Endothelial cell of umbilical vein (primary cell): ENCODE measurements at regions of chr18 and their contacts with region 1.

Region 1: GRCh38 chr18:23225503-23225902 is 90.2 kb downstream of the CABLES1 start:
- DNase-seq: peak; percentile 75
- H3K4me3 ChIP-seq: no peak overlapping the region
- H3K27ac ChIP-seq: peak overlapping the region; percentile 98
- H3K4me1 ChIP-seq: peaks cover 52% of the 10 kb centered on the region
- H3K27me3 ChIP-seq: no peaks in the 10 kb centered on the region
- CTCF ChIP-seq: no peak
- POLR2A ChIP-seq: no peak

Region 2: GRCh38 chr18:23207191-23207955 is 18.1 kb before region 1 on chr18:
- CTCF ChIA-PET with region 1: interaction called, 11 read pairs
- POLR2A ChIA-PET with region 1: interaction called, 4 read pairs
- dilution Hi-C with region 1: no loop called
- intact Hi-C with region 1: no loop called
- DNase-seq: peak; percentile 20
- H3K4me3 ChIP-seq: no peak overlapping the region
- H3K27ac ChIP-seq: no peak overlapping the region
- H3K4me1 ChIP-seq: no peaks in the 10 kb centered on the region
- H3K27me3 ChIP-seq: no peaks in the 10 kb centered on the region
- CTCF ChIP-seq: peak; percentile 39 to 52
- POLR2A ChIP-seq: no peak